ENCODE measurements at regions of chr10 and their contacts with region 1.

Region 1: GRCh38 chr10:63083904-63084689 is 49.0 kb upstream of the NRBF2 start:
- DNase-seq: peak; percentile 56
- H3K4me3 ChIP-seq: no peak overlapping the region
- H3K27ac ChIP-seq: no peak overlapping the region; a peak in 1 of 4 replicates
- H3K4me1 ChIP-seq: no peaks in the 10 kb centered on the region
- H3K27me3 ChIP-seq: no peaks in the 10 kb centered on the region
- CTCF ChIP-seq: peak; percentile 69
- EP300 ChIP-seq: no peak
- RAD21 ChIP-seq: peak; percentile 94

Region 2: DNA sequence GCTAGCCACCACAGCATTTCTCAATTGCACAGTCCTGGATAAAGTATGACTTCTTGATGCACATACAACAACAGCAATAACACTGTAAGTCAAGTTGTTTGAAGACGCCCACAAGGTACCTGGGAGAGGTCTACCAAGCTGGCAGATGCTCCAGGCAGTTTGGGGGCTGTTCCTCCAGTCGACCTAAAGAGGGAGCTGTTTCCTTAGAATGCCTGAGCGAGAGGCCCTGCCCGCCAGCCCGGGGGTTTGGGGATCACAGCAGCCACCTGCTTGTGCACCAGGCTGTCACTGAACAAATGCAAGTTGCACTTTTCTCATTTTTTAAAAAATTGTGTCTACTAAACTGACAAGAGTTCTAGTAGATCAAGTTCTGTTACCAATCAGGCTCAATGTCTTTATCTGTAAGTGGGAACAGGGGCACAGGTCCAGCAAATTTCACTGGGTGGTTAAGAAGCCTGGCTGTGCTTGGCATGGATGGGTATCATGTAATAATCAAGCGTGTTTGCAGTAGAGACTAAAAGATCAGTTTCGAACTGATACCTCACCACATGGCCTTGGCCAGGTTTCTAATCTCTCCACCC is 473.4 kb before region 1 on chr10:
- CTCF ChIA-PET with region 1: interaction called, 11 read pairs
- POLR2A ChIA-PET with region 1: no interaction called
- DNase-seq: peak; percentile 73
- H3K4me3 ChIP-seq: no peak overlapping the region
- H3K27ac ChIP-seq: no peak overlapping the region
- H3K4me1 ChIP-seq: no peaks in the 10 kb centered on the region
- H3K27me3 ChIP-seq: no peaks in the 10 kb centered on the region
- CTCF ChIP-seq: peak; percentile 78
- EP300 ChIP-seq: no peak
- RAD21 ChIP-seq: peak; percentile 79

Region 3: DNA sequence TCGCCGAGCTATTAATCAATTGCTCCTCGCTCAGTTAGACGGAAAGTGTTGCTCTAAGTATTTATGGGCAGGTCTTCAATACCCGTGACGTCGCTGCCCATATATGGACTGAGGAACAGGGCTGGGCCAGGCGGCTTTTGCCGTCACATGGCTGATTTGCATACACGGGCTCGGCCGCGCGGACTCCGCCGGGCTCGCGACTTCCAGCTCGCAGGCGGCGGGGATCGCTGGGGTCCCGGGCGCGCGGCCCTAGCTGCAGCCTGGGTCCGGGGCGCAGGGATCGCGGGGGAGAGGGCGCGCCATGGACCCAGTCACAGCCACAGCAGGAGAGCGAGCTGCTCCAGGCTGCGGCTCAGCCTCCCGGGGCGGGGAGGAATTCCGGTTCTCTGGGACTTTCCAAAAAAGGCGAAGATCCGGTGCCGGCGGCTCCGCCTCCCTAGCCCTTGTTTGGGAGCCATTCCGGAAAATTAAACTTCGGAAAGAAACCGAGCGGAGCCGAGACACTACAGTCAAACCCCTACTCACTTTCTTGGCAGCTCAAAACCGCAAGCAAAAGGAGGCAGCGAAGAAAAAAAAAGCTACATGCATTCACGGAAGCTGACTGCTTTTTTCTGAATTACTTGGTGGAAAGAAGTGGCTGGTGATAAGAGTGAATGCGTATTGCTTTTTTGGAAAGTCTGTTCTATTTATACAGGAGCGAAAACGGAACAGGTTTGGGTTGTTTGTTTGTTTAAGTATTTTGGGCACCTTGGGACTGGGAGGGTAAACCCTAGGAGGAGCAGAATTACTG is 267.6 kb before region 1 on chr10 and contains the start of gene EGR2:
- CTCF ChIA-PET with region 1: interaction called, 19 read pairs
- POLR2A ChIA-PET with region 1: no interaction called
- DNase-seq: peak; percentile 92
- H3K4me3 ChIP-seq: peak within 1 kb of the TSS; percentile 71 to 73
- H3K27ac ChIP-seq: peak within 1 kb of the TSS in 1 of 2 experiments; percentile 72; a peak in 2 of 4 replicates
- H3K4me1 ChIP-seq: peaks cover 12 to 28% of the 10 kb centered on the region in 2 experiments; a peak in 3 of 4 replicates
- H3K27me3 ChIP-seq: peaks cover 49% of the 10 kb centered on the region
- CTCF ChIP-seq: no peak
- EP300 ChIP-seq: no peak
- RAD21 ChIP-seq: no peak
- polyA plus RNA-seq, gene EGR2: 0.25 and 0.47 TPM in 2 replicates

Region 4: DNA sequence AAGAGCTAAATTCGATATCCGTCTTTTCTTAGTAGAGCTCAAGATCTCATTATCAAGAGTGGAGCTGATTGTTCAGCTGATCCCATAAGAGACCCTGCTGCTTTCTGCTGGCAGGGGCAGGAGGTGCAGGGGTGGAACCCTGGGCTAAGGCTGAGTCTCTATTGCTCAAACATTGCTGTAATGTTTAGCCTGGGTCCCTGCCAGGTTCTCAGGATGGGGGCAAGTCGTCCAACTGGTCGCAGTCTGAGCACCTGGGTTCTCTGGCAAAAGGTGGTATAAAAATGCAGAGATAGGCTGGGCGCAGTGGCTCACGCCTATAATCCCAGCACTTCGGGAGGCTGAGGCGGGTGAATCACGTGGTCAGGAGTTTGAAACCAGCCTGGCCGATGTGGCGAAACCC is 13.0 kb before region 1 on chr10:
- CTCF ChIA-PET with region 1: interaction called, 31 read pairs
- POLR2A ChIA-PET with region 1: no interaction called
- DNase-seq: no peak
- H3K4me3 ChIP-seq: no peak overlapping the region
- H3K27ac ChIP-seq: no peak overlapping the region
- H3K4me1 ChIP-seq: peaks cover 0 to 8% of the 10 kb centered on the region in 2 experiments; a peak in 2 of 4 replicates
- H3K27me3 ChIP-seq: peaks cover 8% of the 10 kb centered on the region; the same call in 1 of the 2 replicates
- CTCF ChIP-seq: no peak
- EP300 ChIP-seq: no peak
- RAD21 ChIP-seq: no peak